Dendritic cell treated with granulocyte-macrophage colony-stimulating factor and Interleukin-4, amounts not matched to agents 40 ng/mL and 50 ng/mL, for 4 days (primary cell): ENCODE measurements at regions of chr2 and their contacts with region 1.

Region 1: DNA sequence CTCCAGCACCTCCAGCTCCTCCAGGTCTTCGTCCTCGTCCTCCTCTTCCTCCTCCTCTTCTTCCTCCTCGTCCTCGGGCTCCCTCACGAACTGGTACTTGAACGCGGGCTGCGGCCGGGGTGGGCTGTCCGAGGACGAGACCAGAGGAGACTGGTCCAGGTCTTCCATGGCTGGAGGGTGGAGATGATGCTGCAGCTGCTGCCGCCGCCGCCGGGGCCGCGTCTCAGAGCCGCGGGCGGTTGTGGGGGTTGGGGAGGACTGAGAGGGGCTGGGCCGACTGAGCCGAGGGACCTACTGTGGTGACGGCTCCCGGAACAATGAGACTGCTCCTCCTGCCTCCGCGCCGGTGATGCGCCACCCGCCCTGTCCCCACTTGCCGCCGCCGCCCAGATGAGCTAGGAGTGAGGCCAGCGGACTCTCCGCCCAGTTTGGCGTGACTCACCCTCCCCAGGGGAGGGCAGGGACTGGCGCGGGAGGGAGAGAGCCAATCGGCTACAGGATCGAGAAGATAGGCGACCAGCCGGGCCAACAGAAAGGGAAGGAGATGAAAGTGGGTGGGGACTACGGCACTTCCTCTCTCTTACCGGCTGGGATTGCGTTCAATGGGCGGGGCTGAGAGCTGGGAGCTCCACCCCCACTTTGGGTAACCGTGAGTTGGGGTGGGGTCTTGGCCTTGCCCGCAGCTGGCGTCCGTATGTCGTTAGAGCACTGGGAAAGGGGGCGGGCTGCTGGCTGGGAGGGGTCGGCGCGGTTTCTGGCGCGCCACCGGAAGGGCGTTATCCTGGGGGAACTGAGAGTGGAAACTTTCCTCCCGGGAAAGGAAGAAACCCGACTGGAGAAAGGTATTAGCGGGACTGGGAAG is at the start of gene RTN4:
- H3K4me3 Mint-ChIP-seq: peak within 1 kb of the TSS; percentile 100
- H3K27ac Mint-ChIP-seq: peak within 1 kb of the TSS; percentile 97
- H3K4me1 Mint-ChIP-seq: peaks cover 27% of the 10 kb centered on the region
- H3K27me3 Mint-ChIP-seq: no peaks in the 10 kb centered on the region

Region 2: GRCh38 chr2:55014962-55015939 is 35.1 kb before region 1 on chr2:
- intact Hi-C with region 1: loop called (anchors 2 kb)
- H3K4me3 Mint-ChIP-seq: no peak overlapping the region
- H3K27ac Mint-ChIP-seq: no peak overlapping the region
- H3K4me1 Mint-ChIP-seq: peaks cover 60% of the 10 kb centered on the region
- H3K27me3 Mint-ChIP-seq: no peaks in the 10 kb centered on the region

Region 3: DNA sequence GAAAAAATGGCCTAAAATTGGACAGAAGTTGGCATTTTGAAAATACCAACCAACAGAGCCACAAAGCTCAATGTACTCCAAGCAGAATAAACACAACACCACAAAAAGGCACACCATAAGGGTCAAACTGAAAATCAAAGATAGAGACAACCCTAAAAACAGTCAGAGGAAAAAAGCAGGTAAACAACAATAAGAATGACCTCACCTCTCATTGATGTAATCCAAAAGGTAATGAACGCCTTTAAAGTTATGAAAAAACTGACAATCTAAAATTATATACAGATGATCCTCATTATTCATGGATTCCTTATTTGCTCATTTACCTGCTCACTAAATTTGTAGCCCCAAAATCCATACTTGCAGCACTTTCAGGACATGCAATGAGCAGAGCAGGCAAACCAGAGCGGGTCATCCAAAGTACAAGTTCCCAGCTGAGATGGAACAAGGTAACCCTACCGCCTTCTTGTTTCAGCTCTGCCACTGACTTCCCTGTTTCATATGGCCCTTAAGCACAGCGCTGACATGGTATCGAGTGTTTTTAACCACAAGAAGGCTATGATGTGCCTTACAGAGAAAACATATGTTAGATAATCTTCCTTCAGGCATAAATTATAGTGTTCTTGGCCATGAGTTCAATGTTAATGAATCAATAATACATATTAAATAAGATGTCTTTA is 17.2 kb before region 1 on chr2:
- intact Hi-C with region 1: loop called (anchors 2 kb)
- H3K4me3 Mint-ChIP-seq: no peak overlapping the region
- H3K27ac Mint-ChIP-seq: peak overlapping the region; percentile 17
- H3K4me1 Mint-ChIP-seq: peaks cover 63% of the 10 kb centered on the region
- H3K27me3 Mint-ChIP-seq: no peaks in the 10 kb centered on the region

Region 4: GRCh38 chr2:55111570-55112228 is 61.3 kb after region 1 on chr2:
- intact Hi-C with region 1: loop called (anchors 1 kb)
- H3K4me3 Mint-ChIP-seq: peak overlapping the region; percentile 36
- H3K27ac Mint-ChIP-seq: peak overlapping the region; percentile 92
- H3K4me1 Mint-ChIP-seq: peaks cover 48% of the 10 kb centered on the region
- H3K27me3 Mint-ChIP-seq: no peaks in the 10 kb centered on the region

Region 5: DNA sequence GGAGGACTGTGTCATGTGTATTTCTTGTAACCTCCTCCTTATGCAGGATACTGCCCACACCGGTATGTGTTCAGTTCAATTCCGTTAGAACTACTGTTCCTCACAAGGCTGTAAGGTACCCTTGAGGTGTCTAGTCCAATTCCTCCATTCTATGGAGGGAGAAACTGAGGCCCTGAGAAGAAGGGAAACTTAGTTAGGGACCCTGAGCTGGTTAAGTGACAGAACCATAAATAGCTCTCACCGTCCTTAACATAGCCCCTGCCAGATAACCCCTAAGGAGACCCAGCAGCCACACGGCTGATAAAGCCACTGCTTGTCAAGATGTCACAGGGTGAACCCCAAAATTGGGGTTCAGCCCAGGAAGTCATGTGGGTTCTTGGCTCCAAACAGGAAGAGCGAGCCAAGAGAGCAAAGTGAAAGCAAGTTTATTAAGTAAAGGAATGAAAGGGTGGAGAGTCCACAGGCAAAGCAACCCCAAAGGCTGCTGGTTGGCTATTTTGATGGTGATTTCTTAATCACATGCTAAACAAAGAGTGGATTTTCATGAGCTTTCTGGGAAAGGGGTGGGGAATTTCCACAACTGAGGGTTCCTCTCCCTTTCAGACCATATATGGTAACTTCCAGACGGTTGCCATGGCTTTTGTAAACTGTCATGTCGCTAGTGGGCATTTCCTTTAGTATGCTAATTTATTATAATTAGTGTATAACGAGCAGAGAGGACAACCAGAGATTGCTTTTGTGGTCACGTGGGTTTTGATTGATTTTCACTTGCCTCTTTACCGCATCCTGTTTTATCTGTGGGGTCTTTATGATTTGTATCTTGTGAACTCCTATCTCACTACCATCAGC is 83.3 kb after region 1 on chr2:
- intact Hi-C with region 1: loop called (anchors 1 kb)
- H3K4me3 Mint-ChIP-seq: peak overlapping the region; percentile 76
- H3K27ac Mint-ChIP-seq: peak overlapping the region; percentile 85
- H3K4me1 Mint-ChIP-seq: peaks cover 54% of the 10 kb centered on the region
- H3K27me3 Mint-ChIP-seq: no peaks in the 10 kb centered on the region

Region 6: GRCh38 chr2:55150834-55151233 is 100.5 kb after region 1 on chr2:
- intact Hi-C with region 1: loop called (anchors 5 kb)
- H3K4me3 Mint-ChIP-seq: no peak overlapping the region
- H3K27ac Mint-ChIP-seq: peak overlapping the region; percentile 41
- H3K4me1 Mint-ChIP-seq: peaks cover 63% of the 10 kb centered on the region
- H3K27me3 Mint-ChIP-seq: no peaks in the 10 kb centered on the region

Region 7: DNA sequence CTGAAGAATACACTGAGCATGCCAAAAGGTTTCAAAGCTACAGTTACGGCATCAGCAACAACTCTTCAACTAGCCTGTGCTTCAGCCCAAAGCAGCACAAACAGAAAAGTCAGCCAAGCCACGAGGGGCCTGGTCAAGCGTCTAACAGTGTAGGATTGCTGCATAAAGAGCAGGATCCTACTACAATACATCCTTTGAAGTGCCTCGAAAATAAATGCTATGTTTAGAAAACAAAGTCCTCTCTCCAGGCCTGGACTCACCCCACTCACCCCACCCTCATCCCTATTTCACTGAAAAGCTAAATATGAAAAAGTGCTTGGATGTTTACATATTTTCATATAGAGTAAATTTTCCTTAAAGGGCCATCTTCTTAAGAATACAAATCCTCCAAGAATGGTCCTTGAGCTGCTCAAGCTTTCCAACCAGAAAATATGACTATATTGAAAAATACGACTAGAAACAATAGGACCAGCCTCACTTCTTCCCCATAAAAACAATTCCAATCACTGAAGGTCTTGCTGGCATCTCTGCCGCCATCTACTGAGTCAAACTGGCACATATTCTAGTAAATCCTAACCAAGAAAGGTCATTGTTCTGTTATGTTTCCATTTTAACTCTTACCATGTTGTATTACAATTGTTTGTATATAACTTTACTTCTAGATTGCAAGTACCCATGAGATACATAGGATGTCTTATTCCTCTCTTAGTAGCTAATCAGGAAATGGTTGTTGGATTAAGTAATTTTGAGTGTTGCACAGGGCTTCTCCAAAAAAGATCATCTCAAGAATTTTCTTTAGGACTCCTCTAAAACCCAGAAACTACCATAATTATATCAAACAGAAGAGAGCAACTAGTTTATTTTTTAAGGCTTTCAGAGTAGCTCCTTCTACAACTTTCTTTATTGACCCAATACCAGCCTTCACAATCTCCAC is 118.1 kb after region 1 on chr2:
- intact Hi-C with region 1: loop called (anchors 2 kb)
- H3K4me3 Mint-ChIP-seq: no peak overlapping the region
- H3K27ac Mint-ChIP-seq: no peak overlapping the region
- H3K4me1 Mint-ChIP-seq: peaks cover 21% of the 10 kb centered on the region
- H3K27me3 Mint-ChIP-seq: no peaks in the 10 kb centered on the region